Activated naive CD4-positive, alpha-beta T cell treated with anti-CD3 and anti-CD28 coated beads, Interleukin-2, amount 10 ng/mL, durations not matched to agents 7 days and 5 days (primary cell): ENCODE measurements at regions of chr12 and their contacts with region 1.

Region 1: DNA sequence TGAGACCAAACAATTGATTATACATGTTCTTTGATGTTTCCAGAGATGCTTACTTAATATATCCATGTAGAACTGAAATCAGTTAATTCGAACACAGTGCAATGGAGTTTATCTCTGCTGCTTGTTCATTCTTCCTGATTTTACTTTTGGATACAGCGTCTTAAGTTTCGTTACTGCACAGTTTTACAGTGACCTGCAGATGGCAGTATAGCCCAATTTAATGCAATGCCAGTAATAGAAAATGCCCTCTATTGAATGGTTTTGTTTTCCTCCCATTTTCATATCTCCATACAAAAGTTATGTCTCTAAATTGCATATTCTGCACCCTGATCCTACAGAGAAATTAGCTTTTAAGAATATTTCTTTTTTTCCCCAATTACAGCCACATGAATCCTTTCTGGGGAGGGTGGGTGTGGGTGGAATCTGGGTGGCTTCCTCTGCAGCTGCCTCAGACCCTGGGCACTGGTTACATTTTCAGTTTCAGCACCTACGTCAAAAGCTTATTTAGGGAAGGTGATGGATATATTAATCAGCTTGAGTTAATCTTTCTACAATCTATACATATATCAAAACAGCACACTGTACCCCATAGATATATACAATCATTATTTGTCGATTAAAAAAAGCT is 101.1 kb upstream of the DCD start:
- DNase-seq: peak; percentile 49
- H3K4me3 Mint-ChIP-seq: peak overlapping the region; percentile 39
- H3K27ac Mint-ChIP-seq: no peak overlapping the region
- H3K4me1 Mint-ChIP-seq: peaks cover 30% of the 10 kb centered on the region
- H3K27me3 Mint-ChIP-seq: no peaks in the 10 kb centered on the region

Region 2: GRCh38 chr12:54701940-54702592 is 47.2 kb before region 1 on chr12:
- CTCF ChIA-PET with region 1: interaction called, 18 read pairs
- DNase-seq: no peak
- H3K4me3 Mint-ChIP-seq: no peak overlapping the region
- H3K27ac Mint-ChIP-seq: no peak overlapping the region
- H3K4me1 Mint-ChIP-seq: no peaks in the 10 kb centered on the region
- H3K27me3 Mint-ChIP-seq: peaks cover 12% of the 10 kb centered on the region

Region 3: GRCh38 chr12:54759751-54760150 is 10.4 kb after region 1 on chr12:
- CTCF ChIA-PET with region 1: interaction called, 17 read pairs
- DNase-seq: peak; percentile 38
- H3K4me3 Mint-ChIP-seq: no peak overlapping the region
- H3K27ac Mint-ChIP-seq: no peak overlapping the region
- H3K4me1 Mint-ChIP-seq: peaks cover 22% of the 10 kb centered on the region
- H3K27me3 Mint-ChIP-seq: no peaks in the 10 kb centered on the region

Region 4: GRCh38 chr12:54935235-54935951 is 186.1 kb after region 1 on chr12:
- CTCF ChIA-PET with region 1: interaction called, 10 read pairs
- DNase-seq: peak; percentile 28
- H3K4me3 Mint-ChIP-seq: peak overlapping the region; percentile 39
- H3K27ac Mint-ChIP-seq: peak overlapping the region; percentile 97
- H3K4me1 Mint-ChIP-seq: peaks cover 59% of the 10 kb centered on the region
- H3K27me3 Mint-ChIP-seq: no peaks in the 10 kb centered on the region

Region 5: DNA sequence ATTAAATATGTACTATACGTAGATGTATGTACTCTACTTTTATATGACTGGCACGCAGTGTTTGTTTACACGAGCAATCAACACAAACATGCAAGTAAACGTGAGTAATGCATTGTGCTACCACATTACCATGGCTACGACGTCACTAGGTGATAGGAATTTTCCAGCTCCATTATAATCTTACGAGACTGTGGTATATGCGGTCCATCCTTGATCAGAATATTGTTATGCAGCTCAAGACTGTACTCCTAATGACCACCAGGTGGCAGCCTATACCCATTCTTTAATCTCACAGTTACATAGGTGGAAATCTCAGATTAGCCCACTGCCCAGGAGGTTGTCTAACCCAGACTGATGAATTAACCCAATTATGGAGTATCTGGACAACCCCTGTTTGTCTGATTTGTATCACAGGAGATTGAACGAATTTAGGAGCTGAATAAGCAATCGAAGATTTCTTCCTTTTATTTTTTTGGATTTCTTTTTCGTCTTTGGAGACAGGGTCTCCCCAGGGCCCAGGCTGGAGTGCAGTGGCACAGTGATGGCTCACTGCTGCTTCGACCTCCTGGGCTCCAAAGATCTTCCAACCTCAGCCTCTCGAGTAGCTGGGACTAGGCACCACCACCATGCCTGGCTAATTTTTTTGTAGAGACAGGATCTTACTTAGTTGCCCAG is 244.0 kb after region 1 on chr12:
- CTCF ChIA-PET with region 1: interaction called, 45 read pairs
- DNase-seq: peak; percentile 67
- H3K4me3 Mint-ChIP-seq: no peak overlapping the region
- H3K27ac Mint-ChIP-seq: no peak overlapping the region
- H3K4me1 Mint-ChIP-seq: peaks cover 43% of the 10 kb centered on the region
- H3K27me3 Mint-ChIP-seq: peaks cover 5% of the 10 kb centered on the region